Activated CD4-positive, alpha-beta memory T cell treated with anti-CD3 and anti-CD28 coated beads for 36 hours (primary cell): ENCODE measurements at regions of chr13 and their contacts with region 1.

Region 1: GRCh38 chr13:27270594-27271520 is at the start of gene RASL11A:
- DNase-seq: peak; percentile 73
- H3K4me3 Mint-ChIP-seq: peak within 1 kb of the TSS; percentile 82
- H3K27ac Mint-ChIP-seq: no peak within 1 kb of the TSS
- H3K4me1 Mint-ChIP-seq: peaks cover 11% of the 10 kb centered on the region
- H3K27me3 Mint-ChIP-seq: peaks cover 15% of the 10 kb centered on the region
- total RNA-seq, gene RASL11A: 4.8 to 6.8 TPM

Region 2: GRCh38 chr13:27259831-27260230 is 11.0 kb before region 1 on chr13:
- CTCF ChIA-PET with region 1: interaction called, 12 read pairs
- POLR2A ChIA-PET with region 1: interaction called, 14 read pairs
- intact Hi-C with region 1: no loop called
- DNase-seq: no peak
- H3K4me3 Mint-ChIP-seq: no peak overlapping the region
- H3K27ac Mint-ChIP-seq: peak overlapping the region; percentile 81
- H3K4me1 Mint-ChIP-seq: peaks cover 64% of the 10 kb centered on the region
- H3K27me3 Mint-ChIP-seq: no peaks in the 10 kb centered on the region